ENCODE measurements at regions of chr20 and their contacts with region 1.

Region 1: DNA sequence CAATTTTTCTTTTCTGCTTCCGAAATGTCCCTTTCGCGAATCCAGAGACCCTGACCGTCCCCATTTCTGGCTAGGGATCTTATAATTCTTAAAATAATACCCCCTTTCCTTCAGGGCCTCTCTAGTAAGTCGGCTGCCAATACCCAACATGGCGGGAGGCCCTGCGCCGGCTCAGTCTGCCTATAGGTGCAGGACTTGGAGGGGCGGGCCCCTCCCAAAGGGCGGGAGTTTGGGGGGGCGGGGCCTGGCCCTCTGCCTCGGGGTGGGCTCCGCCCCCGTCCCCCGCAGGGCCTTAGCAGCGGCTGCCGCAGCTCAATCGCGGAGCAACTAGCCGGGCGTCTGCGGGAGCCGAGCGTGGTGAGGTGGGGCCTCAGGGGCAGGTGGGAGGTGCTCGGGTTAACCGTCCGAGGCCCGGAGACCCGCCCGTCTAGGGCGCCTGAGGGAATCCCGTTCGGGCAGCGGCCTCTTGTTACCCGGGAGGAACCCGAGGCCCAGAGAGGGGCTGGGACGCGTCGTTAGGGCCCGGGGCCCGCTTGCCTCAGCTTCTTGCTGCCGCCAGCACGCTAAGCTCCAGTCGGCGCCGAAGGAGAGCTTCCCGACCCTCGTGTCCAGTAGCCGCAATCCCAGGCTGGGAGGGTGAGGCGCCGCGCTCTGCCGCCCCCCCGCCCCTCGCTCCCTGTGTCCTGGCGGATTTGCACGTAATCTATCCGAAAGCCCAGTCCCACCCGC is at the start of gene CEP250:
- DNase-seq: peak; percentile 88
- H3K4me3 Mint-ChIP-seq: peak within 1 kb of the TSS; percentile 93
- H3K27ac Mint-ChIP-seq: peak within 1 kb of the TSS; percentile 99
- H3K4me1 Mint-ChIP-seq: peaks cover 22% of the 10 kb centered on the region
- H3K27me3 Mint-ChIP-seq: no peaks in the 10 kb centered on the region
- total RNA-seq, gene CEP250: 44.4 and 45.6 TPM in 2 replicates

Region 2: DNA sequence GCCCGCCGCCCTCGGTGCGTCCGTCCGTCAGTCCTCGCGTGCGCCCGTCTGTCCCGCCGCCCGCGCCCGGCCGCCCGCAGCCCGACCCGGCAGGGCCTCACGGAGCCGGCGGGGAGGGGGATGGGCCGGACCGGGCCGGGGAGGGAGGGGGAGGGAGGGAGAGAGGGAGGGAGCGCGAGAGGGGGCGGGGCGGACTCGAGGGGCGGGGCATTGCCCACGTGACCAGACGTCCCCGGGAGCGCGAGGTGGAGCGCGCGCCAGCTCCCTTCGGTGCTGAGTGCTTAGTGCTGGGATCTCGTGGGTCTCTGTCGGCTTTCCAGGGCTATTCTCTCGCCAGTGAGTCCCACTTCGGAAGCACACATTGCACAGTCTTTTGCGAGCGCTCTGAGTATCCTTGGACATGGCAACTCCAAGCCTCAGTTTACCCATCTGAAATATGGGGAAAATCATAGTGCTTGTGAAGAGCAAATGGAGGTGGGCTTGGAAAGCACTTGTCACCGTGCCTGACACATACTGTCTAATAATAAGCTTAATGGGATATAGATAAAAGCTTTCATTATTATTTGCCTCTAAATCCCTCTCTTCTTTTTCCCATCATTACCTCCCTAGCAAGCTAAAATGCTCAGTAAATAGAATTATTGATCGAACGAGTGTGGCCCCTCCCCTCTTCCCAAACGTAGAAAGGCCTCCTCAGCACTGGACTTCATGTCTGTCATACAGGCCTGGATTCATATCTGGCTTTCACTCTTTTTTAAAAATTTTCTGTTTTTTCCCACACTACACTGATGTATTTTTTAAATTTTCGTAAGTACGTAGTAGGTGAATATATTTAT is 629.3 kb before region 1 on chr20 and contains the start of gene NCOA6:
- intact Hi-C with region 1: loop called (anchors 10 kb)
- DNase-seq: peak; percentile 68
- H3K4me3 Mint-ChIP-seq: peak within 1 kb of the TSS; percentile 97
- H3K27ac Mint-ChIP-seq: peak within 1 kb of the TSS; percentile 91
- H3K4me1 Mint-ChIP-seq: peaks cover 30% of the 10 kb centered on the region
- H3K27me3 Mint-ChIP-seq: peaks cover 13% of the 10 kb centered on the region
- total RNA-seq, gene NCOA6: 25.5 and 29.1 TPM in 2 replicates

Region 3: DNA sequence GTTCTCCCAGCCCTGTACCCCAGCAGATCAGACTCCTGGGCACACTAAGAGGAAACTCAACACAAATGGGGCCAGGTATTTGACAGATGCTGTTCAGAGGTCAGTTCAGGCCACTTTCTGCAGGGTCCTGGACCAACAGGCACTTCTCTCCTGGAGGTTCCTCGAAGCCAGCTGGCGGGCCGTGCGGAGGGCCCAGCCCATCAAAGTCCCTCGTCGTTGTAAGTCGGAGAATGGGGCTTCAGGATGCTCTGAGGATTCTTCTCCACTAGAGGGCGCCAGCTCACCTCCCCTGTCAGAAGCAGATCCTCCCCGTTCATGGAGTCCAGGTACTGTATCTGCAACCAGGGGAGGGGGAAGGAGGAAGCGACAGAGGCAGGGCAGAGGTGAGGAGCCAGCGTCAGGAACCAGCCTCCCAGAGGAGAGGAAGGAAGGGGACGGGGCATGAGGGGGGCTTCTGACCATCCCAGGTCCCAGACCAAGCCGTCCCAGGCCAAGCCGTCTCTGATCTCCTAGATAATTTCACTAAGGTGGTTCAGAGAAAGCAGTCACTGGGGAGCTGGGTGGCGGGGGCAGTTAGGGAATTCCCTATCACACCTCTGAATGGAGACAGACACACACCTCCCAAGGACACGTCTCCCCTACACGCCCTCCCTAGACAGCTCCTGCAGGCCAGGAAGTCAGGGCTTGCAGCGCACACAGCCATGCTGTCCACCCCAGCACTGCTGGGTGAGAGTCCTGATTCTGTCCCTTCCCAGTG is 151.1 kb before region 1 on chr20:
- intact Hi-C with region 1: loop called (anchors 2 kb)
- DNase-seq: peak; percentile 81
- H3K4me3 Mint-ChIP-seq: no peak overlapping the region
- H3K27ac Mint-ChIP-seq: peak overlapping the region; percentile 71
- H3K4me1 Mint-ChIP-seq: peaks cover 32% of the 10 kb centered on the region
- H3K27me3 Mint-ChIP-seq: no peaks in the 10 kb centered on the region

Region 4: GRCh38 chr20:35410613-35411012 is 44.4 kb before region 1 on chr20:
- intact Hi-C with region 1: loop called (anchors 1 kb)
- DNase-seq: no peak
- H3K4me3 Mint-ChIP-seq: peak overlapping the region; percentile 87
- H3K27ac Mint-ChIP-seq: peak overlapping the region; percentile 19
- H3K4me1 Mint-ChIP-seq: peaks cover 6% of the 10 kb centered on the region
- H3K27me3 Mint-ChIP-seq: no peaks in the 10 kb centered on the region

Region 5: GRCh38 chr20:35490736-35491181 is 35.7 kb after region 1 on chr20:
- intact Hi-C with region 1: loop called (anchors 5 kb)
- DNase-seq: peak; percentile 62
- H3K4me3 Mint-ChIP-seq: peak overlapping the region; percentile 99
- H3K27ac Mint-ChIP-seq: peak overlapping the region; percentile 100
- H3K4me1 Mint-ChIP-seq: peaks cover 49% of the 10 kb centered on the region
- H3K27me3 Mint-ChIP-seq: no peaks in the 10 kb centered on the region

Region 6: GRCh38 chr20:35575970-35576623 is 121.1 kb after region 1 on chr20:
- intact Hi-C with region 1: no loop called
- DNase-seq: no peak
- H3K4me3 Mint-ChIP-seq: no peak overlapping the region
- H3K27ac Mint-ChIP-seq: no peak overlapping the region
- H3K4me1 Mint-ChIP-seq: no peaks in the 10 kb centered on the region
- H3K27me3 Mint-ChIP-seq: peaks cover 8% of the 10 kb centered on the region

Region 7: DNA sequence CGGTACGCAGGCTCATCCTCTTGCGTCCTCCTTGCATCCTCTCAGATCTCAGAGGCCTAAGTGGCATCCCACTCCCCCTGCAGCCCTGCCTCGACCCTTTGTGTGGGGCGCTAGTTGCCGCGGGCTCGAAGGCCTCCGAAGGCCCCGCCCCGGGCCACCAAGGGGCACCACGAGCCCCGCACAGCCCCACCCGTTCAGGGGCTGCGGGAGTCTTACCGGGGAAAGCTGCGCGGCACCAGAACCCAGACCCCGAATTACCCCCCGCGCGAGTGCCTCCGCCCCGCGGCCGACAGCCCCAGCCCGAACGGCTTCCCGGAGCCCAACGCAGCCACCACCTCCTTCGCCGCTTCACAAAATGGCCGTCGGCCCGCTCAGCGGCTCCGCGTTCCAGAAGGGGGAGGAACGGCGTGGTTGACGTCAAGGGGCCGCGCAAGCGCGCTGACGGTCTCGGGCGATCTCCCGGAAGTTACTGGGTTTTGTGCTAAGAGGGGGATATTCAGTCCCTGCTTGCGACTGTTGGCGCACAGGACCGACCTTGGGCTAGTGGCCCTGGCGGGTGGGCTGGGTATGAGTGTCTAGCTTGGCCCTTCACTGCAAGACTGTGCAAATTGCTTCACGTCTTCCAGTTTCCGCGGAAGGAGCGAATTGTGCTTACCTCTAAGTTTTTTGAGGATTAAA is 209.6 kb after region 1 on chr20 and contains the starts of genes CPNE1 and RBM12:
- intact Hi-C with region 1: loop called (anchors 10 kb)
- DNase-seq: peak; percentile 91
- H3K4me3 Mint-ChIP-seq: peak within 1 kb of the TSS; percentile 95
- H3K27ac Mint-ChIP-seq: peak within 1 kb of the TSS; percentile 99
- H3K4me1 Mint-ChIP-seq: peaks cover 48% of the 10 kb centered on the region
- H3K27me3 Mint-ChIP-seq: no peaks in the 10 kb centered on the region
- total RNA-seq, gene CPNE1: 304 and 308 TPM in 2 replicates
- total RNA-seq, gene RBM12: 151 and 168 TPM in 2 replicates

Region 8: DNA sequence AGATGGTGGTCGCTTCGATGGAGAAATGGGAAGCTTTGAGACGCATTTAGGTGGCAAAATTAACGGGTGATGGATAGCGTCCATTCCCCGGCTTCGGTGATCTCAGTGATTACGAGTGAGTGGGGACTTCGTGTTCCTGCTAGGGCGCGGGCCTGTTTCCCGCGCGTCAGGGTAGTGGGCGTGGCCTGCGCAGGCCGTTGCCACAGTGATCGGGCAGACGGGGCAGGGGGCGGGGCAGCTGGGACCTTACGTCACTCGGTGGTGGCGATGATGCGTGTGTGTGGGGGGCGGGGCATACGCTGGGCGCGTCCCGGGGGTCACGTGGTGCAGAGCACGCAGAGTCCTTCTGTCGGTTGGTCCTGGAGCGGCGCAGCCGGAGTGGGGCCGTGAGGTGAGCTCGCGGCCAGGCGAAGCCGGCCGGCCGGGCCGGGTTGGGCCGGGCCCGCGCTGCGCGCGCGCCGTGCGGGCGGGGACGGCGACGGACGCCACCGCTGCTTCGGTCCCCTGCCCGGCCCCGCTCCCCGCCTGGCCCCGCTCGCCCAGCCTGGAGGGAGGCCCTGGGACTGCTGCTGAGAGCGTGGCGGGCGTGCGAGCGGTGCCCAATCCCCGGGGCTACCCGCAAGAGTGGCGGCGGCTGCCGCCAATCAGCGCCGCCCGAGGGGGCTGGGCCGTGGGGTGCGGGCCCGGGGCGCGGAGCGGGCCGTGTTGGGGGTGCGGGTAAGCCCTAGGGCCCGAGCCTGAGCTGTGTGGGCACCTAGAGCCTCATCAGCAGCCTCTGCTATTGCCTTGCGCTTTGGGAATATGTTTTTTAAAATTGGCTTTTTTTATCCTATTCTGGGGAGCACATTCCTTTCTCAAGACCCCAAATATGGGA is 316.9 kb after region 1 on chr20 and contains the start of gene PHF20:
- intact Hi-C with region 1: loop called (anchors 1 kb)
- DNase-seq: peak; percentile 98
- H3K4me3 Mint-ChIP-seq: peak within 1 kb of the TSS; percentile 94
- H3K27ac Mint-ChIP-seq: peak within 1 kb of the TSS; percentile 95
- H3K4me1 Mint-ChIP-seq: peaks cover 60% of the 10 kb centered on the region
- H3K27me3 Mint-ChIP-seq: no peaks in the 10 kb centered on the region
- total RNA-seq, gene PHF20: 50.5 and 61.9 TPM in 2 replicates